ENCODE measurements at regions of chr4 and their contacts with region 1.

Region 1: GRCh38 chr4:95165926-95166524 is 382.7 kb downstream of the UNC5C start:
- DNase-seq: peak in 2 of 10 donors; percentile 14 to 58
- H3K4me3 ChIP-seq: no peak overlapping the region
- H3K27ac ChIP-seq: peak overlapping the region in 57 of 59 donors; percentile 11 to 99 (median 92)
- H3K27me3 ChIP-seq: no peaks in the 10 kb centered on the region
- CTCF ChIP-seq: peak; percentile 72 to 94 (median 83)

Region 2: DNA sequence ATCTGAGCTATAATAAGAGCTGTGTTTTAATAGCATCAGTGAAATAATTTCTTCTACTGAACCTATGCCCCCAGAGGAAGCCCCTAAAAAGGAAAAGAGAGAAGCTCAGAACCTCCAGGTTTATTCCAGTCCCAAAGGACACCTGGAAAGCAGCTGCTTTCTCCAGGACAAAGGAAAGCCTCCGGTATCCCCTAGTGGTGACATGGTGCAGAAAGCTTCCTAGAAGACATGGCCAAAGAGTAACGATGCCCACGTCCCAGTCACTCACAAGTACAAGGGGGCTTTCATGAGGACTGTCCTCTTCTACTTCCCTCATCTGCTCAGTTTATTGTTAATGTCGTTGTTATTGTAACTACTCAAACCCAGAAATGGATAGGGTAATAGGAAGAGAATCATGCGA is 38.8 kb after region 1 on chr4:
- intact Hi-C with region 1: loop called (anchors 5 kb)
- DNase-seq: no peak
- H3K4me3 ChIP-seq: no peak overlapping the region
- H3K27ac ChIP-seq: peak overlapping the region in 57 of 59 donors; percentile 14 to 95 (median 75)
- H3K27me3 ChIP-seq: no peaks in the 10 kb centered on the region
- CTCF ChIP-seq: peak in 53 of 56 donors; percentile 10 to 75 (median 48)

Region 3: GRCh38 chr4:95415346-95415771 is 249.3 kb after region 1 on chr4:
- intact Hi-C with region 1: loop called in 1 of 2 experiments (anchors 5 kb)
- DNase-seq: no peak
- H3K4me3 ChIP-seq: no peak overlapping the region
- H3K27ac ChIP-seq: peak overlapping the region in 33 of 59 donors; percentile 9 to 97 (median 92)
- H3K27me3 ChIP-seq: no peaks in the 10 kb centered on the region
- CTCF ChIP-seq: no peak

Region 4: GRCh38 chr4:95835672-95836071 is 669.6 kb after region 1 on chr4:
- intact Hi-C with region 1: loop called in 1 of 2 experiments (anchors 10 kb)
- DNase-seq: no peak
- H3K4me3 ChIP-seq: no peak overlapping the region
- H3K27ac ChIP-seq: no peak overlapping the region
- H3K27me3 ChIP-seq: no peaks in the 10 kb centered on the region
- CTCF ChIP-seq: peak in 34 of 56 donors; percentile 12 to 47 (median 33)

Region 5: GRCh38 chr4:96352051-96352517 is 1186.1 kb after region 1 on chr4:
- intact Hi-C with region 1: loop called in 1 of 2 experiments (anchors 10 kb)
- DNase-seq: peak in 1 of 10 donors; percentile 11
- H3K4me3 ChIP-seq: no peak overlapping the region
- H3K27ac ChIP-seq: no peak overlapping the region
- H3K27me3 ChIP-seq: no peaks in the 10 kb centered on the region
- CTCF ChIP-seq: peak in 36 of 56 donors; percentile 4 to 55 (median 35)

Measured in dorsolateral prefrontal cortex (tissue), 120 donors.